MCF 10A (cell line): ENCODE measurements at regions of chr10 and their contacts with region 1.

Region 1: GRCh38 chr10:4767033-4767814 is 58.8 kb upstream of the AKR1E2 start:
- DNase-seq: peak; percentile 57
- H3K4me3 Mint-ChIP-seq: no peak overlapping the region
- H3K27ac Mint-ChIP-seq: peak overlapping the region; percentile 76
- H3K4me1 Mint-ChIP-seq: peaks cover 31% of the 10 kb centered on the region
- H3K27me3 Mint-ChIP-seq: no peaks in the 10 kb centered on the region
- CTCF ChIP-seq: peak; percentile 78

Region 2: DNA sequence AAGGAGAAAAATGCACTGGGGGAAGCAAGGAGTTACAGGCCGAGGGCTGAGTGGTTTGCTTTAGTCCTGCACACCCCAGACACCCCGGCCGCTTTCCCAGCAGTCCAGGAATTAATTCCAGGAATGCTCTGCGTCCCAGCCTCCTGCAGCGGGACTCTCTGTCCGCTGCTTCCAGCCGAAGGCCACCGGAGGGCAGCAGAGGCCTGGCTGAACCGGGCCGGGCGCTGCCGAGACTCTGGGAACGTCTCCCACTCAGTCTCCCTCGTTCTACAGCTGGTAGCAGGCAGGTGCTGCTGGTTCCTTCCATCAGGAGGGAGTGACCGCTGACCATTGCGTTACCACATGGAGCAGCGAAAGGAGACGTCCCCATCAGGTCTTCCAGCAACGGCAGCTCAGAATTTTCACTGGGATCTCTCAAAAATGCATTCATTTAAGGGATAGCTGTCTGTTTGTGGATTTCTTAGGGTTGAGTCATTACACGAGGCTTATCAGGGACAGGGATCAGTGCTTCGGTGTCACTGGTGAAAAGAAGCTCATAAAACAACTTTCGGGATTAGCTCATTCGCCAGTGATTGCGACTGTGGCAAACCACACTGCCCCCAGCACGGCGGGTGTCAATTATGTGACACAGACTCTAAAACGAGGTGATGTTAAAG is 1569.7 kb before region 1 on chr10:
- CTCF ChIA-PET with region 1: interaction called, 70 read pairs
- POLR2A ChIA-PET with region 1: interaction called, 15 read pairs
- intact Hi-C with region 1: loop called (anchors 1 kb)
- DNase-seq: peak; percentile 80
- H3K4me3 Mint-ChIP-seq: peak overlapping the region; percentile 69
- H3K27ac Mint-ChIP-seq: peak overlapping the region; percentile 61
- H3K4me1 Mint-ChIP-seq: peaks cover 16% of the 10 kb centered on the region
- H3K27me3 Mint-ChIP-seq: no peaks in the 10 kb centered on the region
- CTCF ChIP-seq: peak; percentile 79

Region 3: DNA sequence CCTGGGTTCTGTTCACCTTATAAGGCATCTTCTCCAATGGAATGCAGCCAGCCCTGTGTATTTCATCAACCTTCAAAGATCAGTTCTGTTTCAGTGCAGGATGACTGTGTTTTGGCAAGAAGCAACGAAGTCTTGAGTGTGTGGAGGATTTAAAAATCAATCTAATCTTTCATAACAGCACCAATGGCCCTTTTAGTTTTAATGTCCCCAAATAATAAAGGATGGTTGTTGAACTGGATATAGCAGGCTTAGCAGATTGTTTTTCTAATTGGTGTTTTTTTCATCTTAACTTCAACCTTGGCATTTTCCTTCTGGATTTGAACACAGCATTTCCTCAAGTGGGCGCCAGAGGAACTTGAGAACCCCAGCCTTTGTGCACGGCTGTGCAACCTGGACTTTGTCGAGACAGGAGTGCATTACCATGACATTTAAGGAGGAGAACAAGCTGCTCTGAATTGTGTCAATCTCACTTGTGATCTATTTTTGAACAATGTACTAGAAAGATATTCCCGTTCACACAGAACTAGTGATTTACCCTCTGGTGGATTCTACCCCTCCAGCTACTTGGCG is 254.5 kb before region 1 on chr10:
- CTCF ChIA-PET with region 1: interaction called, 8 read pairs
- POLR2A ChIA-PET with region 1: interaction called, 5 read pairs
- intact Hi-C with region 1: loop called (anchors 1 kb)
- DNase-seq: peak; percentile 78
- H3K4me3 Mint-ChIP-seq: no peak overlapping the region
- H3K27ac Mint-ChIP-seq: peak overlapping the region; percentile 76
- H3K4me1 Mint-ChIP-seq: peaks cover 9% of the 10 kb centered on the region
- H3K27me3 Mint-ChIP-seq: no peaks in the 10 kb centered on the region
- CTCF ChIP-seq: peak; percentile 52

Region 4: DNA sequence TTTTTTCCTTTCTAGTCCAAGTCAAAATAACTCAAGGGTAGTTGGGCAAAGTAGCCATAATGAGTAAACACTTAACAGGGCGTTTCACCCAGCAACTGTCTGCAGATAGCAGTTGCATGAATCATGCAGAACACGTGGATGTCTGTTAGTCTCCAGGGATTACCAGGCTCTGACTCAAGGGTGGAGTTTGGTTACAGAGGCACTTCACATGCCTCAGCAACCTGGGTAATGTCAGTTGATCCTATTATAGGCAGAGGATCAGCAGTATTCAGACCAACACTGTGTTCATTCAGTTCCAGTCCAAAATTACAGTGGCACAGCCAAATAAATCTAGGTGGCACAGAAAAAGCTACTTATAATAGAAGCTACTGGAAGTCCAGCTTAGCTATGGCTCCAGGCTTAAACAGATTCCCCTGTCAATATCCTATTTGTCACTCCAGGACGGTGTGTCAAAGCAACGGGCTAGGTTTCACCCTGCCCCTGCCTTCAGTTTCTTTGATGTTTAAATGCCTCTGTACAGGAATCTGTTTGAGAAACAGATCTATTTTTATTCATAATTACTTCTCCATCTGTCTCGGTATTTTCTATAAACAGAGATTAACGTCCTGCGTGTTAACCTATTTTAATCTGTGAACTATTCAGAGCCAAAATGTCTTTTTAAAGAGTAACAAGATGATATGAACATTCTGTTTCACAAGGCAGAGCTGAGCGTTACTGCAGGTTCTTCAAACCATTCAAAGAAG is 103.9 kb before region 1 on chr10:
- CTCF ChIA-PET with region 1: interaction called, 7 read pairs
- POLR2A ChIA-PET with region 1: interaction called, 26 read pairs
- intact Hi-C with region 1: no loop called
- DNase-seq: peak; percentile 99
- H3K4me3 Mint-ChIP-seq: peak overlapping the region; percentile 66
- H3K27ac Mint-ChIP-seq: peak overlapping the region; percentile 100
- H3K4me1 Mint-ChIP-seq: peaks cover 28% of the 10 kb centered on the region
- H3K27me3 Mint-ChIP-seq: no peaks in the 10 kb centered on the region
- CTCF ChIP-seq: no peak

Region 5: GRCh38 chr10:4678023-4678950 is 88.9 kb before region 1 on chr10:
- CTCF ChIA-PET with region 1: interaction called, 15 read pairs
- POLR2A ChIA-PET with region 1: interaction called, 28 read pairs
- intact Hi-C with region 1: loop called (anchors 2 kb)
- DNase-seq: peak; percentile 81
- H3K4me3 Mint-ChIP-seq: peak overlapping the region; percentile 58
- H3K27ac Mint-ChIP-seq: peak overlapping the region; percentile 90
- H3K4me1 Mint-ChIP-seq: peaks cover 33% of the 10 kb centered on the region
- H3K27me3 Mint-ChIP-seq: no peaks in the 10 kb centered on the region
- CTCF ChIP-seq: no peak